ENCODE measurements at regions of chr9 and their contacts with region 1.

Region 1: DNA sequence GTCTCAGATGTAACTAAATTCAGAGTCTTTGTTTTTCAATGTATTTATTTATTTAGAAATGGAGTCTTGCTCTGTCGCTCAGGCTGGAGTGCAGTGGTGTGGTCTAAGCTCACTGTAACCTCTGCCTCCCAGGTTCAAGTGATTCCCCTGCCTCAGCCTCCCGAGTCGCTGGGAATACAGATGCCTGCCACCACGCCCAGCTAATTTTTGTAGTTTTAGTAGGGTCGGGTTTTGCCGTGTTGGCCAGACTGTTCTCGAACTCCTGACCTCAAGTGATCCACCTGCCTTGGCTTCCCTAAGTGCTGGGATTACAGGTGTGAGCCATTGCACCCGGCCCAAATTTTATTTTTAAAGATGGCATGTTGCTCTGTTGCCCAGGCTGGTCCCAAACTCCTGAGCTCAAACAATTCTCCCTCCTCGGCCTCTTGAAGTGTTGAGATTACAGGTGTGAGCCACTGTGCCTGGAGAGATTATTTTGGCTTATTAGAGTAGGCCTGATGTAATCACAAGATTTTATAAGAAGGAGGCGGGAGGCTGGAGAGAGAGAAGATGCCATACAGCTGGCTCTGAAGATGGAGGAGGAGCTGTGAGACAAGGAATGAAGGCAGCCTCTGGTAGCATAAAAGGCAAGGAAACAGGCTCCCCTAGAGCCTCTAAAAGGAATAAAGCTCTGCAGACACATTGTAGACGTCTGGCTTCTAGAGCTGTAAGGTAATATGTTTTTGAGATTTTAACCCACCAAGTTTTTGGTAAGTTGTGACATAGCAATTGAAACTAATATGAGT is 12.9 kb upstream of the KLF9 start:
- DNase-seq: no peak
- ATAC-seq: peak; percentile 43
- H3K4me3 ChIP-seq: no peak overlapping the region
- H3K4me3 Mint-ChIP-seq: no peak overlapping the region
- H3K27ac ChIP-seq: no peak overlapping the region
- H3K27ac Mint-ChIP-seq: no peak overlapping the region
- H3K4me1 ChIP-seq: peaks cover 3% of the 10 kb centered on the region
- H3K4me1 Mint-ChIP-seq: peaks cover 13% of the 10 kb centered on the region
- H3K27me3 ChIP-seq: no peaks in the 10 kb centered on the region
- H3K27me3 Mint-ChIP-seq: no peaks in the 10 kb centered on the region
- CTCF ChIP-seq: no peak

Region 2: DNA sequence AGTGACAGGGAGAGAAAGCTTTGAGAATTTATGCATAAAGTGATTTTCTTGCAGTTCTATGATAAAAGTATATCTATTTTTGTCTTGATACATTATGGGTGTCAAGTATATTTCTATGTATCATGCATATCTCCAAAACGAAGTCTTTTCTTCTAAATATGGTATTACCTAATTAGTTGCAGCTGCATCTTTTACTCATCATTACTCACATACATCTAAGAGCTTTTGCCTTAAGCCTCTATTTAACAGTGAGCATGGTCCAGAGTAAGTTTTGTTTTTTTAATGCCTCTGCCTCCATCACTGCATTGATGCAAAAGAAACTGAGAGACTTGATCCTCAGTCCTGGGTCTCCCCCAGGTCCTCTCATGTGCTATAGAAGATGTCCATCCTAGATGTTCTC is 208.6 kb before region 1 on chr9:
- CTCF ChIA-PET with region 1: no interaction called
- POLR2A ChIA-PET with region 1: no interaction called
- intact Hi-C with region 1: no loop called
- DNase-seq: no peak
- ATAC-seq: no peak
- H3K4me3 ChIP-seq: no peak overlapping the region
- H3K4me3 Mint-ChIP-seq: no peak overlapping the region
- H3K27ac ChIP-seq: no peak overlapping the region
- H3K27ac Mint-ChIP-seq: no peak overlapping the region
- H3K4me1 ChIP-seq: no peaks in the 10 kb centered on the region
- H3K4me1 Mint-ChIP-seq: no peaks in the 10 kb centered on the region
- H3K27me3 ChIP-seq: no peaks in the 10 kb centered on the region
- H3K27me3 Mint-ChIP-seq: no peaks in the 10 kb centered on the region
- CTCF ChIP-seq: no peak

Region 3: GRCh38 chr9:70462300-70462699 is 34.9 kb after region 1 on chr9:
- CTCF ChIA-PET with region 1: no interaction called
- POLR2A ChIA-PET with region 1: no interaction called
- intact Hi-C with region 1: loop called in 1 of 2 experiments (anchors 5 kb)
- DNase-seq: no peak
- ATAC-seq: no peak
- H3K4me3 ChIP-seq: no peak overlapping the region
- H3K4me3 Mint-ChIP-seq: no peak overlapping the region
- H3K27ac ChIP-seq: no peak overlapping the region
- H3K27ac Mint-ChIP-seq: no peak overlapping the region
- H3K4me1 ChIP-seq: no peaks in the 10 kb centered on the region
- H3K4me1 Mint-ChIP-seq: peaks cover 2% of the 10 kb centered on the region
- H3K27me3 ChIP-seq: no peaks in the 10 kb centered on the region
- H3K27me3 Mint-ChIP-seq: no peaks in the 10 kb centered on the region
- CTCF ChIP-seq: no peak

Measured in CD4-positive, alpha-beta T cell (primary cell).